Right ventricle myocardium superior (tissue), 1 donor: ENCODE measurements at regions of chr11 and their contacts with region 1.

Region 1: GRCh38 chr11:35391922-35392813 is 27.2 kb downstream of the SLC1A2 start:
- DNase-seq: peak; percentile 87
- ATAC-seq: peak; percentile 94

Region 2: DNA sequence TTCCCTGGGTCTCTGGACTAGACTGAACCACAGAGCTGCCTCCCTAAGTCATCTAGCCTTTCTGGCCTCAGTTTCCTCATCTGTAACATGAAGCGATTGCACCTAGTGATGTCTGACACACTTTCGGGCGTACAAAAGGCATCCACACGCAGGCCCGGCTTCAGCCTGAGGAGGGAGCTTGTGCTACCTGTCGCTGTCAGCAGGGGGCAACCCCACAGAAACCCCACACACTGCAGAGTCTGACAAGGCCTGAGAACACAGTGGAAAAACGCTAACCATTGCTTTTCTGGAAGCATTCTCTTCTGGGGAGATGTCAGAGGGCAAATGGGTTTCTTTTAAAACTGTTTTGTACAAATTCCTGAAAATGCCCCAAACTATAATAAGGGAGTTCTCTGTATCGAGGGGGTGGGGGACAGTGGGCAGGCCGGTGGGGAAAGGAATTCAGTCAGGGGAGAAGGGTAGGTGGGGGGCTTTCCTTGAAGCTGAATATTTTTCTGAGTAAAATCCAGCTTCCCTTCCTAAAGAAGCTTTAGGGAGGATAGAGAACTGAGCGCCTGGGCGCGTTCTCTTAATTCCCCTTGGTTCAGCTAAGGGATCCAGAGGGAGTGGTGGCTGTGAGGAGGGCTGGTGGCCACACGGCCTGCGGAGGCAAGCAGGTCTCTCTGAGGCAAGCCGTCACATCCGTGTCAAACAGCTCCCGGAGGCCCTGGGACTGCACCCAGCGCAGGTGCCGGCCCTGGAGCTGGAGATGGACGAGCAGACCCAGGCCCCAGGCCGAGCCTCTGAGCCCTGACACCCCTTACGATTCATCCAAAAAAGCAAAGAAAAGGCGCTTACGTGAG is 879.1 kb before region 1 on chr11:
- intact Hi-C with region 1: loop called (anchors 10 kb)
- DNase-seq: peak; percentile 46
- ATAC-seq: peak; percentile 82

Region 3: GRCh38 chr11:34585735-34586487 is 806.3 kb before region 1 on chr11:
- intact Hi-C with region 1: loop called (anchors 10 kb)
- DNase-seq: no peak
- ATAC-seq: peak; percentile 68

Region 4: GRCh38 chr11:34773826-34774225 is 618.3 kb before region 1 on chr11:
- intact Hi-C with region 1: no loop called
- DNase-seq: no peak
- ATAC-seq: no peak

Region 5: GRCh38 chr11:34926101-34926830 is 465.9 kb before region 1 on chr11:
- intact Hi-C with region 1: loop called (anchors 5 kb)
- DNase-seq: no peak
- ATAC-seq: peak; percentile 72

Region 6: GRCh38 chr11:35237860-35238715 is 154.1 kb before region 1 on chr11:
- intact Hi-C with region 1: loop called (anchors 10 kb)
- DNase-seq: no peak
- ATAC-seq: peak; percentile 52